AG04450 (cell line): ENCODE measurements at regions of chr2 and their contacts with region 1.

Region 1: GRCh38 chr2:237572021-237572741 is 5.8 kb downstream of the PRLH start:
- DNase-seq: peak; percentile 85
- H3K4me3 ChIP-seq: no peak overlapping the region
- H3K27ac ChIP-seq: no peak overlapping the region
- H3K27me3 ChIP-seq: peaks cover 3% of the 10 kb centered on the region
- CTCF ChIP-seq: peak; percentile 98

Region 2: DNA sequence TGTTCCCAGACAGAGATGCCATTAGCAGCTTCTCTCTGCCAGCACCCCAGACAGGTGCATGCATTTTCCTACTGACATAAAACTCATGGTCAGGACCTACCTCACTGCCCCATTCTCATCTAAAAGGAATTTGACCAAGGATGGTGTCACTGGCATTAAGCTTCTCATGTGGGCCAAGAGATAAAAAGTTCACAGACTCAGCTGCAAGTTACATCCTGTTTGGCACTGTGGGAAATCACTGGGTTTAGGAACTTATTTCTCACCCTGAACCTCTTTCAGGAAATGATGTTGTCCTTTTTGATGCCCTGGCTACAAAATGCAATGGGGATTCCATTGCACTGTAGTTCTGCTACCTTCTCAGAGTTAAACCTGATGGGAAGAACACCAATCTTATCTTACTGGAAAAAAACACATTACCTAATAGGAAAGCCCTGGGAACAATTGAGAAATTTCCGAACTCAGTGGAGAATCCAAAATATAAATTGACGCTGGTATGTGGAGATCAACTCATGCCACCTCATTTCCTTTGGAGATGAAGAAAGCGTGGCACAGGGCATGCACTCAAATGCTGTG is 738.6 kb before region 1 on chr2:
- CTCF ChIA-PET with region 1: no interaction called
- POLR2A ChIA-PET with region 1: no interaction called
- DNase-seq: no peak
- H3K4me3 ChIP-seq: no peak overlapping the region
- H3K27ac ChIP-seq: no peak overlapping the region
- H3K27me3 ChIP-seq: peaks cover 3% of the 10 kb centered on the region
- CTCF ChIP-seq: no peak

Region 3: GRCh38 chr2:237122214-237122666 is 449.9 kb before region 1 on chr2:
- CTCF ChIA-PET with region 1: interaction called, 59 read pairs
- POLR2A ChIA-PET with region 1: no interaction called
- DNase-seq: peak; percentile 54
- H3K4me3 ChIP-seq: no peak overlapping the region
- H3K27ac ChIP-seq: no peak overlapping the region
- H3K27me3 ChIP-seq: no peaks in the 10 kb centered on the region
- CTCF ChIP-seq: peak; percentile 74

Region 4: DNA sequence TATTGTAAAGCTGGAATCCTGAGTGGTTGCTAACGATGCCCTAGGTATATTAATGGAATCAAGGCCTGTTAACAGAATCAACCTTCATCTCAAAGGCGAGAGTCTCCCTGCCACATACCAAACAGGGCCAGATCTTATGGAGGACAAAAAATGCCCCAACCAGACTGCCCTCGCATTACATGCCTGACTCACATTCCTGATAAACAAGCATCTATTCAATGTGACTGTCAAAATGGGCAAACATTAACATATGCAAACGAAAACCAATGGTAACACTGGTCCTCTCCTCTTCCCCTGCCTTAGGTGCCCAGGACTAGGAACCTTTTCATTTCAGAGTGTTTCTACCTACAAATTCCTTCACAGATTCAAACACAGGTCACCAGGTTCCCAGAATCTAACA is 241.6 kb before region 1 on chr2:
- CTCF ChIA-PET with region 1: no interaction called
- POLR2A ChIA-PET with region 1: no interaction called
- DNase-seq: no peak
- H3K4me3 ChIP-seq: no peak overlapping the region
- H3K27ac ChIP-seq: no peak overlapping the region
- H3K27me3 ChIP-seq: no peaks in the 10 kb centered on the region
- CTCF ChIP-seq: no peak

Region 5: DNA sequence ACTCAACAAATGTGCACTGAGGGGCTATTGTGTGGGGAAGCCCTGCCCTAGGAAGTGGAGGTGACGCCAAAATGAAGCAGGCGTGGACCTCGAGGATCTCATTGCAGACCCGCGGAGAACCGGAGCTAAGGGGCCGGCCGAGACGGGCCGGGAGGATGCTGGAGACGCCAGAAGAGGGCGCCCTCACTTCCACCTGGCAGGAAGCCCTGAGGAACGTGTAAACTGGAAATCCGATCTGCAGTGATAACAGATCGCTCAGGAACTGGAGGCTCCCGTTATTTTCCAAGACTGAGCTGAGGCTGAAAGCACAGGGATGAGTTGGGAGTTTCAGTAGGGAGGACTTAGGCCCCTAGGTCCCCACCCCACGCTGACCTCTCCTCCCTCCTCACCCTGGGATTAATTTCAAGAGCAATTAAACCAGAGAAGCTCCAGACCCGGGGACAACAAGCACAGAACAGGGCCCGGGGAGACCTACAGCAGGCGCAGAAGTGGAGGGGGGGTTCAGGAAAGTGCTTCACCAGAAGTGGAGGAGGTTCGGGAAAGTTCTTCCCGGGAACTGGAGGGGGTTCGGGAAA is 150.6 kb before region 1 on chr2:
- CTCF ChIA-PET with region 1: interaction called, 90 read pairs
- POLR2A ChIA-PET with region 1: no interaction called
- DNase-seq: peak; percentile 77
- H3K4me3 ChIP-seq: no peak overlapping the region
- H3K27ac ChIP-seq: peak overlapping the region; percentile 61
- H3K27me3 ChIP-seq: no peaks in the 10 kb centered on the region
- CTCF ChIP-seq: peak; percentile 90

Region 6: GRCh38 chr2:237512774-237513466 is 59.3 kb before region 1 on chr2:
- CTCF ChIA-PET with region 1: interaction called, 209 read pairs
- POLR2A ChIA-PET with region 1: interaction called, 11 read pairs
- DNase-seq: peak; percentile 71
- H3K4me3 ChIP-seq: no peak overlapping the region
- H3K27ac ChIP-seq: peak overlapping the region; percentile 31
- H3K27me3 ChIP-seq: no peaks in the 10 kb centered on the region
- CTCF ChIP-seq: peak; percentile 92

Region 7: DNA sequence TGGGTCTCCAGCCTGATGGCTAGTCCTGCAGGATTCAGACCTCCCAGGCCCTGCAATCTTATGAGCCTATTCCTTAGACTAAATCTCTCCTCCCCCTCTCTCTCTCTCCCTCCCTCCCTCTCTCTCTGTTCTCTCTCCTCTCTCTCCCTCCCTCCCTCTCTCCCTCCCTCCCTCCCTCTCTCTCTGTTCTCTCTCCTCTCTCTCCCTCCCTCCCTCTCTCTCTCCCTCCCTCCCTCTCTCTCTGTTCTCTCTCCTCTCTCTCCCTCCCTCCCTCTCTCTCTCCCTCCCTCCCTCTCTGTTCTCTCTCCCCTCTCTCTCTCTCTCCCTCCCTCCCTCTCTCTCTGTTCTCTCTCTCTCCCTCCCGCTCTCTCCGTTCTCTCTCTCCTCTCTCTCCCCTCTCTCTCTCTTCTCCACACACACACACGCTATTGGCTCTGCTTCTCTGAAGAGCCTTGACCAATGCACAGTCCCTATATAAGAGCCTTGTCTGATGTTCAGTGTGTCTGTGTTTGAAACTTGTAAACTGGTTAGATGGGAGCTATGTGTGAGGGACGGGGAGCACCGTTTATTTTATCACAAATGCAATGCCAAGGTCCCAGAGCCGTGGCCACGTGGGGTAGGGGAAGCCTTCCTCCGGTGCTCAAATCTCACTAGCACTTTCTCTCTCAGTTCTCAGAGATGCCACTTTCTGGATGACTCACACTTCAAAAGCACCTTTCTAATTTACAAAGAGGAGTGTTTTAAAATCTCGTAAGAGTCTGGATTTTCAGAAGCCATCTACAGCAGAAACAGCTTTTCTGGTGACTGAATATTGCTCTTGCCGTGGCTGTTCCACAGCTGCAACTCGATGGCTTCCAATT is 15.2 kb before region 1 on chr2:
- CTCF ChIA-PET with region 1: interaction called, 27 read pairs
- POLR2A ChIA-PET with region 1: no interaction called
- DNase-seq: no peak
- H3K4me3 ChIP-seq: no peak overlapping the region
- H3K27ac ChIP-seq: no peak overlapping the region
- H3K27me3 ChIP-seq: no peaks in the 10 kb centered on the region
- CTCF ChIP-seq: no peak

Region 8: GRCh38 chr2:237774802-237775553 is 202.8 kb after region 1 on chr2:
- CTCF ChIA-PET with region 1: interaction called, 11 read pairs
- POLR2A ChIA-PET with region 1: no interaction called
- DNase-seq: no peak
- H3K4me3 ChIP-seq: no peak overlapping the region
- H3K27ac ChIP-seq: no peak overlapping the region
- H3K27me3 ChIP-seq: no peaks in the 10 kb centered on the region
- CTCF ChIP-seq: peak; percentile 72